ENCODE measurements at regions of chr2 and their contacts with region 1.

Region 1: GRCh38 chr2:27102329-27102728 is 15.8 kb downstream of the KHK start:
- DNase-seq: peak; percentile 47

Region 2: GRCh38 chr2:27191053-27191829 is 88.9 kb after region 1 on chr2:
- intact Hi-C with region 1: loop called in 1 of 2 experiments (anchors 5 kb)
- DNase-seq: no peak

Region 3: DNA sequence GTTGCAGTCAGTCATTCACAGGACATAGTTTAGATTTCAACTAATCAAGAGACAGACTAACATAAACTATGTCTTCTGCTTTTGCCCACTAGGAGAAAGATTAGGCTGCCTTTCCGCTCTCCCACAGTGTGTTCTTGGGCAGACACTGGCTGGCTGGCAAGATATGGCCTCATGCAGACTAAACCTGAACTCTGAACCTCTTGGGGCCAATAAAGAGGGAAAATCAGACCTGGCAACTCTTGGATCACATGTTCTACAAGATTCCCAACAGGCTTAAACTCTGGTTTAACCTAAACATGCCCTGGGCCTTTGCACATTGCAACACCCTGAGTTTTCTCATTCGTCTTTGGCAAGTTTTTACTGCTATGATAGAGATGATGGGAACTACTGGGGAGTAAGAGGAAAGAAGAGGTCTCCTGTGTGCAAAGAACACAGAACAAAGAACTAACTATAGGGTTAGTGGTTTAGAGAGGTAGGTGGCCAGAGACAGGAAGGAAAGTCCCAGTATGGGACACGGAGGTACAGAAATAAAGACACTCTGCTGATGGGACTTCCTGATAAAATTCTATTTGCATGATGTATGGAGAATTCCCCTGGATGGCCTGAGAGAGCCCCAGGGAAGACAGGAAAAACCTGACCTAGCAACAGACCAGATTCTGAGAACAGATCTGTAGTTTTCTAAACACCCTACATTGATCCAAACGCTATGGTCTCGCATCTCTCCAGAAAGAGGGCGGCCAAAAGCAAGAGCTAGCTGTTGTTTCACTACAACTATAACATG is 107.5 kb after region 1 on chr2:
- intact Hi-C with region 1: loop called in 1 of 2 experiments (anchors 5 kb)
- DNase-seq: peak; percentile 57

Region 4: GRCh38 chr2:27275211-27276150 is 173.2 kb after region 1 on chr2 and contains the start of gene DNAJC5G:
- intact Hi-C with region 1: loop called (anchors 1 to 5 kb)
- DNase-seq: peak; percentile 63
- total RNA-seq, gene DNAJC5G: 0.19 to 1.0 TPM

Region 5: DNA sequence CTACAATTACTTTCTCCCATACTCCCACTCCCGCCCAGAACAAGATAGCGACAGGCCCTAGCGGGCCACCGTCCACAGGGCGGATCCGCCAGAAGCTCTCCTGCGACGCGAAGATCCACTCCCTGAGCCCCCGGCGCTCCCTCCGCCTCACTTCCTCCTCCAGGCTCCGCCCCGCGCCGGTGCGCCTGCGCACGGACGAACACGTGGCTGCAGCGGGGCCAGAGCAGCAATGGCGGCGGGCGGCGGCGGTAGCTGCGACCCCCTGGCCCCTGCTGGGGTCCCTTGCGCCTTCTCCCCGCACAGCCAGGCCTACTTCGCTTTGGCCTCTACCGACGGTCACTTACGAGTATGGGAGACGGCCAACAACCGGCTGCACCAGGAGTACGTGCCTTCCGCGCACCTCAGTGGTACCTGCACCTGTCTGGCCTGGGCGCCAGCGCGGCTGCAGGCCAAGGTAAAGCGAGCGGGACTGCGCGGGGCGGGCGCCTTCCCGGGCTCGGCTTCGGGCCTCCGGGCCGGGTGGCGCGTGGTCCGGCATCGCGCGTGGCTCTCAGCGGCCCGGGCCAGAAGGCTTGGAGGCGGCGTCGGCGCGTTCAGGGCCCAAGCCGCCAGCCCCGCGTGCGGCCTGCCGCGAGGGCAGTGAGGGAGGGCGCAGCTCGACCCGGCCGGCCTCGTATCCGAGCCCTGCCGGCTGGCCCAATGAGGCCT is 1792.3 kb after region 1 on chr2 and contains the start of gene WDR43:
- intact Hi-C with region 1: no loop called
- DNase-seq: peak; percentile 99
- total RNA-seq, gene WDR43: 35.1 to 57.8 TPM

Measured in posterior vena cava (tissue), 2 donors.